A673 (cell line): ENCODE measurements at regions of chr15 and their contacts with region 1.

Region 1: GRCh38 chr15:50876989-50877360 is 31.5 kb upstream of the AP4E1 start:
- DNase-seq: peak; percentile 90
- H3K4me3 ChIP-seq: peak overlapping the region; percentile 32
- H3K27ac ChIP-seq: peak overlapping the region; percentile 43
- H3K4me1 ChIP-seq: peaks cover 27% of the 10 kb centered on the region
- H3K27me3 ChIP-seq: no peaks in the 10 kb centered on the region
- CTCF ChIP-seq: peak; percentile 95

Region 2: GRCh38 chr15:50354838-50355618 is 521.9 kb before region 1 on chr15 and contains the start of gene GABPB1:
- CTCF ChIA-PET with region 1: no interaction called
- POLR2A ChIA-PET with region 1: no interaction called
- intact Hi-C with region 1: loop called (anchors 10 kb)
- DNase-seq: peak; percentile 95
- H3K4me3 ChIP-seq: peak within 1 kb of the TSS; percentile 92
- H3K27ac ChIP-seq: peak within 1 kb of the TSS; percentile 99
- H3K4me1 ChIP-seq: peaks cover 22% of the 10 kb centered on the region
- H3K27me3 ChIP-seq: no peaks in the 10 kb centered on the region
- CTCF ChIP-seq: no peak
- total RNA-seq, gene GABPB1: 35.3 and 40.0 TPM in 2 replicates

Region 3: DNA sequence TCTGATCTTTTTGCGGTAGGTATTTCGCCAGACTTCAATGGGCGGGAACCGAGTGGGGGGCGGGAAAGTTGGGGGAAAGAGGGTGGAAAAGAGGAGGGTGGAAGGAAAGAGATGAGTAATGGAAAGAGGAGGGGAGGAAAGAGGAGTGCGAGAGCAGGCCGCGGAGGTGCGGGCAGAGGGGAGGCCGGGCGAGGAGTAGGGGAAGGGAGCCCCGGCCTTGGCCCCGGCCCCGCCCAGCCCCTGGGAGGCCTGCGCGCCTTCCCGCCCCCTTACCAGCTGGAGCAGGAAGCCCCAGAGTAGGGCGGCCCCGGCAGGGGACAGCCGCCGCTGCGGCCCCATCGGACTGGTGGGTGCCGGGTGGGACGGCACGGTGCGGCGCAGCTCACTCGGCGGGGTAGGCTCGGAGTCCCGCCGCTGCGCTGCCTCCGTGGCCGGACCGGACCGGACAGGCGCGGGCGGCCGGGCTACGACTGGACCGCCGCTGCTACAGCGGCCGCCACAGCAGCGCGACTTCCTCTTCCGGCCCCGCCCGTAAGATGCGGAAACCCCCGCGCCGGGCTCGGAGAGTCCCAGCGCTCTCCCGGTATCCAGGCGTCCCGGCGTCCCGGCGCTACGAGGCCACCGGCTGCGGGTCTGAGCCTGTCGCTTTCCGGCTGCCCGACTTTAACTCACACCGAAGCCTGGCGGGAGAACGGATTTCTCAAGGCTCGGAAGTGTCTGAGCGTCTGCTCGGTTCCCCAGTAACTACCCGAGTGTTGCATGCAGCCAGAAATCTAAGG is 111.6 kb before region 1 on chr15 and contains the start of gene SPPL2A:
- CTCF ChIA-PET with region 1: no interaction called
- POLR2A ChIA-PET with region 1: interaction called, 4 read pairs
- intact Hi-C with region 1: loop called (anchors 10 kb)
- DNase-seq: peak; percentile 94
- H3K4me3 ChIP-seq: peak within 1 kb of the TSS; percentile 60
- H3K27ac ChIP-seq: peak within 1 kb of the TSS; percentile 77
- H3K4me1 ChIP-seq: no peaks in the 10 kb centered on the region
- H3K27me3 ChIP-seq: no peaks in the 10 kb centered on the region
- CTCF ChIP-seq: no peak
- total RNA-seq, gene SPPL2A: 91.6 and 100 TPM in 2 replicates